Naive thymus-derived CD4-positive, alpha-beta T cell (primary cell): ENCODE measurements at regions of chr7 and their contacts with region 1.

Region 1: GRCh38 chr7:1432411-1433082 is 26.7 kb downstream of the MICALL2 start:
- DNase-seq: peak; percentile 51 to 85 (median 70)
- ATAC-seq: peak; percentile 87
- H3K4me3 ChIP-seq: no peak overlapping the region
- H3K4me3 Mint-ChIP-seq: peak overlapping the region in 1 of 10 donors; percentile 8
- H3K27ac ChIP-seq: no peak overlapping the region
- H3K27ac Mint-ChIP-seq: peak overlapping the region in 3 of 9 donors; percentile 26 to 64 (median 61)
- H3K4me1 ChIP-seq: no peaks in the 10 kb centered on the region
- H3K4me1 Mint-ChIP-seq: peaks cover 2 to 8% (median 4%) of the 10 kb centered on the region in 7 donors
- H3K27me3 ChIP-seq: no peaks in the 10 kb centered on the region
- H3K27me3 Mint-ChIP-seq: peaks cover 0 to 6% (median 4%) of the 10 kb centered on the region in 5 donors

Region 2: GRCh38 chr7:1193593-1194424 is 238.7 kb before region 1 on chr7:
- CTCF ChIA-PET with region 1: interaction called, 5 read pairs
- POLR2A ChIA-PET with region 1: no interaction called
- intact Hi-C with region 1: loop called (anchors 1 to 2 kb)
- DNase-seq: peak in 3 of 9 donors; percentile 10 to 37 (median 19)
- ATAC-seq: peak; percentile 68
- H3K4me3 ChIP-seq: no peak overlapping the region
- H3K4me3 Mint-ChIP-seq: no peak overlapping the region
- H3K27ac ChIP-seq: no peak overlapping the region
- H3K27ac Mint-ChIP-seq: peak overlapping the region in 1 of 9 donors; percentile 13
- H3K4me1 ChIP-seq: peaks cover 0 to 5% of the 10 kb centered on the region in 2 donors
- H3K4me1 Mint-ChIP-seq: peaks cover 5 to 26% (median 10%) of the 10 kb centered on the region in 7 donors
- H3K27me3 ChIP-seq: no peaks in the 10 kb centered on the region
- H3K27me3 Mint-ChIP-seq: peaks cover 0 to 32% (median 13%) of the 10 kb centered on the region in 5 donors

Region 3: DNA sequence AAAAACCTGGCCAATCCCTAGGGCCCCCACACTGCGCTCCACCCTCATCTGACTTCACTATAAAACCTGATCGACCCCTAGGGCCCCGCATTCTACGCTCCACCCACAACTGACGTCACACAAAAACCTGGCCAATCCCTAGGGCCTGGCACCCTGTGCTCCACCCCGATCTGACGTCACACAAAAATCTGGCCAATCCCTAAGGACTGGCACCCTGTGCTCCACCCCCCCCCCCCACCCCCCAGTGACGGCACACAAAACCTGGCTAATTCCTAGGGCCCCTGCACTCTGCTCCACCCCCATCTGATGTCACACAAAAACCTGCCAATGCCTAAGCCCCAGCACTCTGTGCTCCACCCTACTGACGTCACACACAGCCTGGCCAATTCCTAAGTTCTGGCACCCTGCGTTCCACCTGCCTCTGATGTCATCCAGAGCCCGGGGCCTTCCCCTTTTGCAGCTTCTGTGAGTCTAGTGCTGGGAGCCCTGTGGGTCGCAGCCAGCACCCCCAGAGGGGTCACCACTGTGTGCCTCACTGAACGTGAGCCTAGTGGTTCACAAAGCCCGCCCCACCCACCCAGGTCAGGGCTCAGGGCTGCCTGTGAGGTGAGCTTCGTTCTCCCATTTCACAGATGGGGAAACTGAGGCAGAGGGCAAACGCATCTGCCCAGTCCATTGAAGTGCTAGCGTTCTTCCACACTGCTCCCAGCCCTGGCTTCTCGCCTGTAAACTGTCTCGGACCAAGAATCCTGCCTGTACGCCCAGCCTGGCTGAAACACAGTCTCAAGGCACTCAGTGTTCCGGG is 13.8 kb before region 1 on chr7:
- CTCF ChIA-PET with region 1: interaction called, 8 read pairs
- POLR2A ChIA-PET with region 1: no interaction called
- intact Hi-C with region 1: loop called (anchors 1 to 2 kb)
- DNase-seq: no peak
- ATAC-seq: no peak
- H3K4me3 ChIP-seq: no peak overlapping the region
- H3K4me3 Mint-ChIP-seq: peak overlapping the region in 1 of 10 donors; percentile 37
- H3K27ac ChIP-seq: no peak overlapping the region
- H3K27ac Mint-ChIP-seq: no peak overlapping the region
- H3K4me1 ChIP-seq: peaks cover 5 to 7% of the 10 kb centered on the region in 2 donors
- H3K4me1 Mint-ChIP-seq: peaks cover 12 to 26% (median 18%) of the 10 kb centered on the region in 7 donors
- H3K27me3 ChIP-seq: no peaks in the 10 kb centered on the region
- H3K27me3 Mint-ChIP-seq: peaks cover 0 to 13% (median 12%) of the 10 kb centered on the region in 5 donors

Region 4: DNA sequence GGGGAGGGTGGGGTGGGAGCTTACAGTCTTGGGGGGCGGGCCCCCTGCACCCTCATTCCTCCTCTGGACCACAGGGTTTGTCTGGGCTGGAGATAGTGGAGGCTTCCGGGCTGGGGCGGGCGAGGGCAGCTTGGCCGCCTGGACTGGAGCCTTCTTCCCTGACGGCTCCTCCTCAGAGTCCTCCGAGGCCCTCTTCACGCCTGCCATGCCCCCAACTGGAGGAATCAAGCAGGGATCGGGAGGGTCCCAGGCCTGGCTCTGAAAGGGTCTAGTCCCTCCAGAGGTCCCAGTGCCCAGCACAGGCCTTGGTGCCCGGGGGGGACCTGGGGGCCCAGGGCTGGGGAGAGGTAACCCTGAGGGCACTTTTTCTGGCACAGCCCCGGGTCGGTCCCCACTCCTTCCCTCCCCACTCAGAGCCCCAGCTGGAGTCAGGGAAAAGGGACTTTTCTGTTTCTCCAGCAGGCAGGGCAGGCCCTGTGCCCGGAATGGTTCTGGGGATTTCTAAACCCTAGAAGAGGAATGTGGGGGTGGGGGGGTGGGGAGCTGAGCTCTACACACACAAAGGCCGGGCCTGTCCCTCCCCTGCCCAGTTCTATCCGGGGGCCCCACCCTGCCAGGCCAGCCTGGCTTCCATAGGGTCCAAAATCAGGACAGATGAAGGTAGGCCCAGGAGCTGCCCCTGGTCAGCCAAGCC is 15.2 kb after region 1 on chr7:
- CTCF ChIA-PET with region 1: no interaction called
- POLR2A ChIA-PET with region 1: no interaction called
- intact Hi-C with region 1: no loop called
- DNase-seq: no peak
- ATAC-seq: no peak
- H3K4me3 ChIP-seq: no peak overlapping the region
- H3K4me3 Mint-ChIP-seq: no peak overlapping the region
- H3K27ac ChIP-seq: no peak overlapping the region
- H3K27ac Mint-ChIP-seq: no peak overlapping the region
- H3K4me1 ChIP-seq: no peaks in the 10 kb centered on the region
- H3K4me1 Mint-ChIP-seq: no peaks in the 10 kb centered on the region
- H3K27me3 ChIP-seq: no peaks in the 10 kb centered on the region
- H3K27me3 Mint-ChIP-seq: no peaks in the 10 kb centered on the region

Region 5: DNA sequence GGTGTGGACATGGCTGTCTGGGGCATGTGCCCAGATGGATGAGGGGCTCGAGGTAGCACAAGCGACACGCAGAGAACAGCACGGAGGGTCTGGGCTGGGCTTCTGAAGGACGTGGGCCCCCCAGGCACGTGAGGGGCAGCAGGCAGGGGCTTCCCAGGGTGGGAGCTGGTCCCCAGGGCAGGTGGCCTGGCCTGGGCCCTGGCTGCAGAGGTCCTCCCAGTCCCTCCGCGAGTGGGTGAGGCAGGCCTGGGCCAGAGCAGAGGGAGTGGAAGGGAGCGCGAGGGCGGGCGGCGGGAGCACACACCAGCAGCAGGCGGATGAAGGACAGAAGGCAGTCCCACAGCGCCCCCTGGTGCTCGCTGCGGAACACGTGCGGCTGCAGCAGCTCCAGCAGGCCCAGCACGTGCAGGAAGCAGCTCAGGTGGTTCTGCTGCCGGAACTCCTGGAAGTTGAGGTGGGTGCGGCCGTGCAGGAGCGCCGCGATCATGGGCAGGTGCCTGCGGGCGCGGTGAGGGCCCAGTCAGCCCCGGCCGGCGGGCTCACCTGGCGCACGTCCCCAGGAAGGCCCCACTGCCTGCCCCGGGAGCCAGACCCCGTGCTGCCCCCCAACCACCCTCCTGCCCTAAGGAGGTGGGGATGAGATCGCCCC is 41.4 kb after region 1 on chr7:
- CTCF ChIA-PET with region 1: interaction called, 3 read pairs
- POLR2A ChIA-PET with region 1: no interaction called
- intact Hi-C with region 1: loop called in 1 of 2 experiments (anchors 1 kb)
- DNase-seq: peak; percentile 77 to 89 (median 87)
- ATAC-seq: peak; percentile 90
- H3K4me3 ChIP-seq: no peak overlapping the region
- H3K4me3 Mint-ChIP-seq: peak overlapping the region in 1 of 10 donors; percentile 49
- H3K27ac ChIP-seq: peak overlapping the region; percentile 45
- H3K27ac Mint-ChIP-seq: no peak overlapping the region
- H3K4me1 ChIP-seq: peaks cover 3 to 14% of the 10 kb centered on the region in 2 donors
- H3K4me1 Mint-ChIP-seq: peaks cover 3 to 12% (median 9%) of the 10 kb centered on the region in 7 donors
- H3K27me3 ChIP-seq: no peaks in the 10 kb centered on the region
- H3K27me3 Mint-ChIP-seq: no peaks in the 10 kb centered on the region

Region 6: GRCh38 chr7:1503816-1504775 is 71.5 kb after region 1 on chr7 and contains the start of gene INTS1:
- CTCF ChIA-PET with region 1: no interaction called
- POLR2A ChIA-PET with region 1: no interaction called
- intact Hi-C with region 1: no loop called
- DNase-seq: peak; percentile 82 to 93 (median 88)
- ATAC-seq: peak; percentile 96
- H3K4me3 ChIP-seq: peak within 1 kb of the TSS; percentile 77
- H3K4me3 Mint-ChIP-seq: peak within 1 kb of the TSS; percentile 80 to 94 (median 87)
- H3K27ac ChIP-seq: peak within 1 kb of the TSS; percentile 77
- H3K27ac Mint-ChIP-seq: peak within 1 kb of the TSS in 8 of 9 donors; percentile 59 to 88 (median 77)
- H3K4me1 ChIP-seq: peaks cover 18 to 35% of the 10 kb centered on the region in 2 donors
- H3K4me1 Mint-ChIP-seq: peaks cover 35 to 60% (median 42%) of the 10 kb centered on the region in 7 donors
- H3K27me3 ChIP-seq: no peaks in the 10 kb centered on the region
- H3K27me3 Mint-ChIP-seq: peaks cover 0 to 4% (median 0%) of the 10 kb centered on the region in 5 donors
- total RNA-seq, gene INTS1: 82.0 to 157 (median 111) TPM

Region 7: GRCh38 chr7:1532483-1533424 is 100.2 kb after region 1 on chr7:
- CTCF ChIA-PET with region 1: no interaction called
- POLR2A ChIA-PET with region 1: no interaction called
- intact Hi-C with region 1: no loop called
- DNase-seq: peak in 8 of 9 donors; percentile 57 to 70 (median 62)
- ATAC-seq: peak; percentile 52
- H3K4me3 ChIP-seq: peak overlapping the region; percentile 74
- H3K4me3 Mint-ChIP-seq: peak overlapping the region; percentile 87 to 94 (median 92)
- H3K27ac ChIP-seq: peak overlapping the region; percentile 90
- H3K27ac Mint-ChIP-seq: peak overlapping the region; percentile 92 to 99 (median 97)
- H3K4me1 ChIP-seq: peaks cover 7 to 10% of the 10 kb centered on the region in 2 donors
- H3K4me1 Mint-ChIP-seq: peaks cover 15 to 36% (median 21%) of the 10 kb centered on the region in 7 donors
- H3K27me3 ChIP-seq: no peaks in the 10 kb centered on the region
- H3K27me3 Mint-ChIP-seq: peaks cover 0 to 3% (median 0%) of the 10 kb centered on the region in 5 donors